Heart right ventricle (tissue), 16 donors: ENCODE measurements at regions of chr9 and their contacts with region 1.

Region 1: GRCh38 chr9:130042833-130043653 is at the start of gene FNBP1:
- DNase-seq: peak; percentile 81 to 84
- ATAC-seq: peak; percentile 93 to 97 (median 96)
- H3K4me3 ChIP-seq: peak within 1 kb of the TSS; percentile 66 to 96 (median 90)
- H3K27ac ChIP-seq: peak within 1 kb of the TSS; percentile 75 to 99 (median 94)
- H3K4me1 ChIP-seq: peaks cover 0 to 67% (median 34%) of the 10 kb centered on the region in 9 donors
- H3K27me3 ChIP-seq: no peaks in the 10 kb centered on the region
- CTCF ChIP-seq: no peak
- total RNA-seq, gene FNBP1: 19.1 to 38.4 (median 23.8) TPM

Region 2: DNA sequence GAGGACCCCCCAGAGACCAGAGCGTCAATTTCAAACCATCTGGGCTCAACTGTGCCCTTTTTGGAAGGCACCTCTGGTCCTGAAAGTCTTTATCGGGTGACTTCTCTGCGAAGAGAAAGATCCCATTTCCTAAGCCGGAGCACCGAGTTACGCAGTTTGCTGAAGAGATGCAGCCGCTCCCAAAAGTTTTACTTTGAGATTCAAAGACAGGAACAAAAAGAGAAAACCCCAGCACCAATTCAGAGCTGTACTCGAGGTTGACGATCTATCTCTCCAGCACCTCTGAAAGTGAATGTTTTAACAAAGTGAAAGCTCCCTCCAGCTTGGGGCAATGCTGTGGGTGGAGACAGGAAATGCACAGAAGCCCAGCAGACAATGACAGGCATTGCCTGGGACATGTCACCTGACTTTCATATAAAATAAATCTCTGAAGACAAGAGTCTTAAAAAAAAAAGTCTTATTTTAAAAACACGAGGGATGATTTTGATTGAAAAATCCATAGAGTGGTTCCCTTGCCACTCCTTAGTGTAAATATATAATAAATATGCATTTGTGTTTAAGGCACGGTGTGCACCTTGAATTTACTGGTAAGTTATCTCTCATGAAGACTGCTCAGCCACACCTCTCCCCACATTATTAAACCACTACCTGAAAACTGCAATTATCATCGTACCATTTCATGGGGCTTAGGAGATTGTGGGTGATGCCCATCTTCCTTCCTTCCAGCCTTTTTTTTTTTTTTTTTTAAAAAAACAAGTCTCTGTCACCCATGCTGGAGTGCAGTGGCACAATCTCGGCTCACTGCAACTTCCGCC is 79.9 kb before region 1 on chr9:
- intact Hi-C with region 1: loop called in 3 of 10 experiments (anchors 10 kb)
- DNase-seq: peak in 1 of 2 donors; percentile 56
- ATAC-seq: peak; percentile 72 to 90 (median 82)
- H3K4me3 ChIP-seq: peak overlapping the region in 9 of 10 donors; percentile 32 to 61 (median 56)
- H3K27ac ChIP-seq: peak overlapping the region; percentile 76 to 97 (median 91)
- H3K4me1 ChIP-seq: peaks cover 3 to 62% (median 37%) of the 10 kb centered on the region in 9 donors
- H3K27me3 ChIP-seq: no peaks in the 10 kb centered on the region
- CTCF ChIP-seq: no peak